CD8-positive, alpha-beta memory T cell (primary cell): ENCODE measurements at regions of chr19 and their contacts with region 1.

Region 1: GRCh38 chr19:14110650-14111049 is 6.9 kb downstream of the PRKACA start:
- DNase-seq: no peak
- H3K4me3 ChIP-seq: no peak overlapping the region
- H3K4me3 Mint-ChIP-seq: no peak overlapping the region
- H3K27ac ChIP-seq: no peak overlapping the region
- H3K27ac Mint-ChIP-seq: peak overlapping the region in 2 of 8 donors; percentile 27 to 33
- H3K4me1 ChIP-seq: peaks cover 18% of the 10 kb centered on the region
- H3K4me1 Mint-ChIP-seq: peaks cover 11 to 39% (median 14%) of the 10 kb centered on the region in 3 donors
- H3K27me3 ChIP-seq: no peaks in the 10 kb centered on the region
- H3K27me3 Mint-ChIP-seq: peaks cover 0 to 4% of the 10 kb centered on the region in 2 donors

Region 2: DNA sequence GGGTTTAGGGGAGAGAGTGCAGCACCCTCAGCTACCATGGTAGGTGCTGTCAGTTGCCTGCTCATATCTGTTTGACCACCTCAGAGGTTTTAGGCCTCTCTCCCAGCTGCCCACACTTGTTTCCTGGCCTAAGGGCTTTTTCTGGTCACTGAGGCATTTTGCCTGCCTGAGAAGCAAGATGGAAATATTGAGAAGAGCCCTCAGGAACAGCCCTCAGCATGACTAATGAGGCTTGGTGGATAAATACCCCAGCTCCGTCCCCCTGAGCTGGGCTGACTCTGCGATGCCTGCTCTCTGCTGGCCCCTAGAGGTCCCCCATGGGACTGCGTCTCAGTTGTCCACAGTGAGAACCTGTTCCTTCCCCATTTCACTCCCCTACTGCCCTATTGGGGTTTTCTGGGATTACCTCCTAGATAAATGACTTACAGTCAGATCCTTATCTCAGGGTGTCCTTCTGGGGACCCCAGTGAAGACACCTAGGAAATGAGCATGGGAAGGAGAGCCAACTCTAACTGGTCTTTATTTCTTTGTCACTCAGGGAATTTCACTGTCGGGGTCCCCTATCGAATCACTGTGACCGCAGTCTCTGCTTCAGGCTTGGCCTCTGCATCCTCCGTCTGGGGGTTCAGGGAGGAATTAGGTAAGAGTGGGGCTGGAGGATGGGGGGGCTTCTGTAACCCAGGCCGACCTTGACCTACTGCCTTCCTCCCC is 62.1 kb before region 1 on chr19:
- CTCF ChIA-PET with region 1: no interaction called
- POLR2A ChIA-PET with region 1: no interaction called
- DNase-seq: peak; percentile 51 to 82 (median 66)
- H3K4me3 ChIP-seq: no peak overlapping the region
- H3K4me3 Mint-ChIP-seq: no peak overlapping the region
- H3K27ac ChIP-seq: no peak overlapping the region
- H3K27ac Mint-ChIP-seq: peak overlapping the region; percentile 13 to 87 (median 76)
- H3K4me1 ChIP-seq: no peaks in the 10 kb centered on the region
- H3K4me1 Mint-ChIP-seq: peaks cover 0 to 9% (median 1%) of the 10 kb centered on the region in 3 donors
- H3K27me3 ChIP-seq: no peaks in the 10 kb centered on the region
- H3K27me3 Mint-ChIP-seq: no peaks in the 10 kb centered on the region

Region 3: DNA sequence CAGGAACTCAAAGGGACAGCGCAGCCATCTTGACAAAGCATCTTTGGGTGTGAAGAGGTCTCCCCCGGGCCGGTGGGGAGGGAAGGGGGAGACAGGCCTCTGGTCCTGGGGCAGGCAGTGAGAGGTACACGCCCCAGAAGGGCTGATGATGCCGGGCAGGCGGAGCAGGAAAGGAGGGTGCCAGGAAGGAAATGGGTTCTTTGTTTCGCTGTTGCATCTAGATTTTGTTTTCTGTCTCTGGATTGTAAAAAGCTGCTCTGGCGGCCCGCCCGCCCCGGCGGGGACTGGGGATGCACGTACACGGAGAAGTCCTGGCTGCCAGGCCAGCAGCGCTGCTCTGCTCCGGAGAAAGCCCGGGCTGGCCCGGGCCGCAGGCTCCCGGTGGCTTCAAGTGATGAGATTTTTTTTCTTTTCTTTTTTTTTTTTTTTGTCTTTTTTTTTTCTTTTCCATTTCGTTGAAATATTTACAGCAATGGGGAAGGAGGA is 38.9 kb after region 1 on chr19:
- CTCF ChIA-PET with region 1: no interaction called
- POLR2A ChIA-PET with region 1: no interaction called
- DNase-seq: peak; percentile 24 to 72 (median 61)
- H3K4me3 ChIP-seq: peak overlapping the region; percentile 59
- H3K4me3 Mint-ChIP-seq: peak overlapping the region; percentile 22 to 87 (median 85)
- H3K27ac ChIP-seq: peak overlapping the region; percentile 58
- H3K27ac Mint-ChIP-seq: peak overlapping the region; percentile 85 to 99 (median 97)
- H3K4me1 ChIP-seq: peaks cover 31% of the 10 kb centered on the region
- H3K4me1 Mint-ChIP-seq: peaks cover 21 to 36% (median 35%) of the 10 kb centered on the region in 3 donors
- H3K27me3 ChIP-seq: no peaks in the 10 kb centered on the region
- H3K27me3 Mint-ChIP-seq: no peaks in the 10 kb centered on the region

Region 4: GRCh38 chr19:14427461-14427860 is 316.8 kb after region 1 on chr19:
- CTCF ChIA-PET with region 1: no interaction called
- POLR2A ChIA-PET with region 1: interaction called, 10 read pairs
- DNase-seq: no peak
- H3K4me3 ChIP-seq: no peak overlapping the region
- H3K4me3 Mint-ChIP-seq: peak overlapping the region in 2 of 7 donors; percentile 48 to 51
- H3K27ac ChIP-seq: no peak overlapping the region
- H3K27ac Mint-ChIP-seq: peak overlapping the region in 2 of 8 donors; percentile 55 to 60
- H3K4me1 ChIP-seq: peaks cover 10% of the 10 kb centered on the region
- H3K4me1 Mint-ChIP-seq: peaks cover 6 to 14% (median 8%) of the 10 kb centered on the region in 3 donors
- H3K27me3 ChIP-seq: no peaks in the 10 kb centered on the region
- H3K27me3 Mint-ChIP-seq: peaks cover 0 to 1% of the 10 kb centered on the region in 2 donors